ENCODE measurements at regions of chr3 and their contacts with region 1.

Region 1: DNA sequence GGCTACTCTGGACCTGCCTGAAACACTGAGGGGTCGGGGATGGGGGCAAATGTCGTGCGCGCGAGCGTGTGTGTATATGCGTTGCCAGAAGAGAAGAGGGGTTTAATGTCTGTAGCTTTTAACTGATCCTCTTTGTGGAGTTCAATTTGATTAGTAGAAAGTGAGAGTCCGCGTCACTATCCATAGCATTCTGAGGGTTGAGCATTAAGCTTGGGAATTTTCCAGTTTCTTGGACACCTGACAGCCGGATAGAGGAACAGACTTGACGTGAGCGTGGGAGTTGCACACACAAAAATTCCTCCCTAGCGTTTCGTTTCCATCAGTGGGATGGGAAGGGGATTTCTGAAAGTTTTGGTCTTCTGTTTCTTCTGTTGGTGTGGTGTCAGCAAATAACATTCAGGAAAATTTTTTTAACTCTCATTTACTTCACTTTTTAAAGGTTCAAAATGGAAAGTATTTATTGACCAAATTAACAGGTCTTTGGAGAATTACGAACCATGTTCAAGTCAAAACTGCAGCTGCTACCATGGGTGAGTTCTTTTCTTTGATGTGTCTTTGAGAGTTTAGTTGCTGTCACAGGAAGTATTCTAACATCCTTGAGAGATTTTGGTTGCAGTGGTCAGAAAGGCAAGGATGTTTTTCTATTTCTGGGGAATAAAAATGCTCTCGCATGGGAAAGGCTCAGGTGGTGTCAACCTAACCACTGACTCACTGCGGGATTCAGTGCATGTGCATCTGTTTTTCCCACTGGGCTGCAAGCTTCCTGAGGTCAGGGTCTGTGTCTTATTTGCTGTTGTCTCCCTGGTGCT is 822 bp downstream of the POGLUT1 start:
- DNase-seq: no peak
- ATAC-seq: no peak; the same call in 1 of the 2 replicates
- H3K4me3 ChIP-seq: peak overlapping the region; percentile 73 to 80
- H3K27ac ChIP-seq: peak overlapping the region; percentile 67
- H3K4me1 ChIP-seq: peaks cover 10 to 17% of the 10 kb centered on the region in 2 experiments; a peak in 3 of 4 replicates
- H3K27me3 ChIP-seq: no peaks in the 10 kb centered on the region
- CTCF ChIP-seq: 0 out of 6 replicates have a peak, but pooled peaks of 1 of the 3 experiments have one; percentile 3
- POLR2A ChIP-seq: no peak
- RAD21 ChIP-seq: no peak

Region 2: DNA sequence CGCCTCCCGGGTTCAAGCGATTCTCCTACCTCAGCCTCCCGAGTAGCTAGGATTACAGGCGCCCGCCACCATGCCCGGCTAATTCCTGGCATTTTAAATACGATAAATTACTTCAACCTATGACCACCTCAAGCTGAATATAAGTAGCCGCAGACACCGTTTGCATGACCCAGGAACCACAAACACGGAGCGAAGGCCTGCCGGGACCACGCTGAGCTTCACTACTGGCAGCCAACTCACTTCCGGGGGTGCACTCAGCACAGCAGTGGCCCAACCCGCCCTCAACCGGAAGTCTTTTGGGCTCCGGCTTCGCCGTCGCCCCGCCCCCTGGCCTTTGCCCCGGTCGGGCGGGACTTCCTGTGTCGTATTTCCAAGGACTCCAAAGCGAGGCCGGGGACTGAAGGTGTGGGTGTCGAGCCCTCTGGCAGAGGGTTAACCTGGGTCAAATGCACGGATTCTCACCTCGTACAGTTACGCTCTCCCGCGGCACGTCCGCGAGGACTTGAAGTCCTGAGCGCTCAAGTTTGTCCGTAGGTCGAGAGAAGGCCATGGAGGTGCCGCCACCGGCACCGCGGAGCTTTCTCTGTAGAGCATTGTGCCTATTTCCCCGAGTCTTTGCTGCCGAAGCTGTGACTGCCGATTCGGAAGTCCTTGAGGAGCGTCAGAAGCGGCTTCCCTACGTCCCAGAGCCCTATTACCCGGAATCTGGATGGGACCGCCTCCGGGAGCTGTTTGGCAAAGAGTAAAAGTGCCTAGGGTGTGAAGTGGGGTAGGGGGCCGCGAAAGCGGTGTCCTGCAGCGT is 28.8 kb after region 1 on chr3 and contains the start of gene TIMMDC1:
- CTCF ChIA-PET with region 1: interaction called, 3 read pairs
- POLR2A ChIA-PET with region 1: no interaction called
- RAD21 ChIA-PET with region 1: no interaction called
- intact Hi-C with region 1: loop called (anchors 2 kb)
- DNase-seq: peak; percentile 92
- ATAC-seq: peak; percentile 95
- H3K4me3 ChIP-seq: peak within 1 kb of the TSS; percentile 62 to 81
- H3K27ac ChIP-seq: peak within 1 kb of the TSS; percentile 79
- H3K4me1 ChIP-seq: peaks cover 7 to 16% of the 10 kb centered on the region in 2 experiments; a peak in 2 of 4 replicates
- H3K27me3 ChIP-seq: no peaks in the 10 kb centered on the region
- CTCF ChIP-seq: no peak
- POLR2A ChIP-seq: peak; percentile 67
- RAD21 ChIP-seq: no peak
- total RNA-seq, gene TIMMDC1: 121 TPM

Measured in HCT116 (cell line).